CD8-positive, alpha-beta T cell (primary cell): ENCODE measurements at regions of chrX and their contacts with region 1.

Region 1: DNA sequence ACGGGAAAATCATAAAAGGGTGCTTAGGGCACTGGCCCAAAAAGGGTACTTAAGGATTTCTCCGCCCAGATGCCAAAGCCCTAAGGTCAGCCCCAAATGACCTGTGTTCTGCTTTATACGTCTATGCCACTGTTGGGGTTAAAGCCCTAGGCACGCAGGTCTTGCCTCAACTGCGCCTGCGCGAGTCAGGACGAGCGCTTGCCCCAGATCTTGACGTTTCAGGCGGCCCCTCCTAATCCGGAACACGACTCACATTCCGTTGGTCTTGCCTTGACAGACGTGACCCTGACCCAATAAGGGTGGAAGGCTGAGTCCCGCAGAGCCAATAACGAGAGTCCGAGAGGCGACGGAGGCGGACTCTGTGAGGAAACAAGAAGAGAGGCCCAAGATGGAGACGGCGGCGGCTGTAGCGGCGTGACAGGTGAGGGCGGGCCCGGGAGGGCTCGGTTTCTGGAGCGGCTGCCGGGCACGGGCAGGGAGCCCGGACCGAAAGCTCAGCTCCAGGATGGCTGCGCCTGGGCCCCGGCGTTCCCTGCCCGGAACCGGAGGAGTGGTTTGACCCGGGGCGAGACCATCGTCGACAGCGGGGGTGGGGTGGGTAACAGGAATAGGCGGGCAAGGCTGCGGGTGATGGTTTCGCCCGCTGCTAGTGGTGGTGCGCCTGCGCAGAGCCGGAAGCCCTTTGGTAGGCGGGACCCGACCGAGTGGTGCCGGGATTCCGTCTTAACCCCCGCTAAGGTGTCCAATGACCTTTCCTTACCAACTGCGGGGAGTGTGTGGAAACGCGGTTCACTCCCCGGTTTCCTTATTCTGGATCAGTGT is at the start of gene ARAF:
- DNase-seq: peak; percentile 86 to 99 (median 94)
- ATAC-seq: peak; percentile 87
- H3K4me3 ChIP-seq: peak within 1 kb of the TSS; percentile 58 to 91
- H3K4me3 Mint-ChIP-seq: peak within 1 kb of the TSS; percentile 95
- H3K27ac ChIP-seq: peak within 1 kb of the TSS; percentile 98 to 99
- H3K27ac Mint-ChIP-seq: peak within 1 kb of the TSS; percentile 99
- H3K4me1 ChIP-seq: peaks cover 29% of the 10 kb centered on the region
- H3K4me1 Mint-ChIP-seq: peaks cover 46% of the 10 kb centered on the region
- H3K27me3 ChIP-seq: no peaks in the 10 kb centered on the region
- H3K27me3 Mint-ChIP-seq: no peaks in the 10 kb centered on the region
- CTCF ChIP-seq: no peak
- total RNA-seq, gene ARAF: 125 to 134 TPM

Region 2: GRCh38 chrX:47233337-47234113 is 327.5 kb before region 1 on chrX:
- CTCF ChIA-PET with region 1: no interaction called
- POLR2A ChIA-PET with region 1: no interaction called
- intact Hi-C with region 1: loop called in 1 of 2 experiments (anchors 2 kb)
- DNase-seq: peak; percentile 81 to 98 (median 95)
- ATAC-seq: peak; percentile 89
- H3K4me3 ChIP-seq: peak overlapping the region; percentile 77 to 96
- H3K4me3 Mint-ChIP-seq: peak overlapping the region; percentile 96
- H3K27ac ChIP-seq: peak overlapping the region; percentile 100
- H3K27ac Mint-ChIP-seq: peak overlapping the region; percentile 99
- H3K4me1 ChIP-seq: peaks cover 34% of the 10 kb centered on the region
- H3K4me1 Mint-ChIP-seq: peaks cover 40% of the 10 kb centered on the region
- H3K27me3 ChIP-seq: no peaks in the 10 kb centered on the region
- H3K27me3 Mint-ChIP-seq: no peaks in the 10 kb centered on the region
- CTCF ChIP-seq: no peak

Region 3: DNA sequence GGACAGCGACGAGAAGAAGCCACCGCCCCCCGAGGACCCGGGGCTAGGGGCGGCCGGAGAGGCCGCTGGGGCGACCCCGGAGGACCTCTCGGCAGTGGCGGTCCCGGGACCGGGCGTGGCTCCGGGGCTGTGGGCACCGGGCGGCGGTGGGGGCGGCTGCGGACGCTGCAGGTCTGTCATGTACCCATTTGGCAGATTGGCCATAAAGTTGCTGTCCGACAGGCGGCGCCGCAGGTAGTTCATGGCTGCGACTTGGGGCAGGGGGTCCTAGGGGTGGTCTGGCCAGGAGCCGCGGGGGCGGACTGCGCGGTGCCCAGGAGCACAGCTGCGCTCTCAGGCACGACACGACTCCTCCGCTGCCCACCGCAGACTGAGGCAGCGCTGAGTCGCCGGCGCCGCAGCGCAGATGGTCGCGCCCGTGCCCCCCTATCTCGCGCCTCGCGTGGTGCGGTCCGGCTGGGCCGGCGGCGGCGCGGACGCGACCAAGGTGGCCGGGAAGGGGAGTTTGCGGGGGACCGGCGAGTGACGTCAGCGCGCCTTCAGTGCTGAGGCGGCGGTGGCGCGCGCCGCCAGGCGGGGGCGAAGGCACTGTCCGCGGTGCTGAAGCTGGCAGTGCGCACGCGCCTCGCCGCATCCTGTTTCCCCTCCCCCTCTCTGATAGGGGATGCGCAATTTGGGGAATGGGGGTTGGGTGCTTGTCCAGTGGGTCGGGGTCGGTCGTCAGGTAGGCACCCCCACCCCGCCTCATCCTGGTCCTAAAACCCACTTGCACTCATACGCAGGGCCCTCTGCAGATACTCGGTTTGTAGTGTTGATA is 58.7 kb after region 1 on chrX and contains the start of gene SYN1:
- CTCF ChIA-PET with region 1: interaction called, 3 read pairs
- POLR2A ChIA-PET with region 1: no interaction called
- intact Hi-C with region 1: loop called (anchors 2 kb)
- DNase-seq: peak; percentile 63 to 93 (median 83)
- ATAC-seq: peak; percentile 89
- H3K4me3 ChIP-seq: peak within 1 kb of the TSS; percentile 39 to 41
- H3K4me3 Mint-ChIP-seq: peak within 1 kb of the TSS; percentile 46
- H3K27ac ChIP-seq: no peak within 1 kb of the TSS
- H3K27ac Mint-ChIP-seq: no peak within 1 kb of the TSS
- H3K4me1 ChIP-seq: peaks cover 10% of the 10 kb centered on the region
- H3K4me1 Mint-ChIP-seq: peaks cover 21% of the 10 kb centered on the region
- H3K27me3 ChIP-seq: no peaks in the 10 kb centered on the region
- H3K27me3 Mint-ChIP-seq: peaks cover 8% of the 10 kb centered on the region
- CTCF ChIP-seq: no peak
- total RNA-seq, gene SYN1: 0.17 TPM in 1 of 2 experiments, not detected in the other

Region 4: DNA sequence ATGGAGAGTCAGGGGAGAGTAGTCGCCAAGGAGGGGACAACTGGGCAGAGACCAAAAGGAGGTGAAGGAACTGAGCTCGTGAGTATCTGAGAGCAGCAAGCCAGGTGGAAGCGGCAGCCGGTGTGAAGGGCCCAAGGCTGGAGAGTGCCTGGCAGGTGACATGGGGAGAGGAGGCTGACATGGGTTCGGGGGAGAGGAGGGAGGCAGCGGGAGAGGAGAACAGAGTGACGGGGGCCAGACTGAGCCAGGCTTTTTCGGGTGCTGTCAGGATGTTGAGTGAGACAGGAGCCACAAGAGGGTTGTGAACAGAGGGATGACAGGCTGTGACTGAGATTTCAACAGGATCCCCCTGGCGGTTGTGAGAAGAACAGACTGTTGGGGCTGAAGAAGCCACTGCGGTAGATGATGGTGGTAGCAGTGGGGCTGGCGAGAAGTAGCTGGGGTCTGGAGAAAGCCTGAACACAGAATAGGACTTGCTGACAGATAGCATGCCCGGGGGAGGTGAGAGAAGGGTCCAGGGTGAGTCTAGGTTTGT is 83.6 kb after region 1 on chrX:
- CTCF ChIA-PET with region 1: no interaction called
- POLR2A ChIA-PET with region 1: no interaction called
- intact Hi-C with region 1: loop called (anchors 1 to 5 kb)
- DNase-seq: peak in 1 of 9 experiments; percentile 33
- ATAC-seq: peak; percentile 42
- H3K4me3 ChIP-seq: no peak overlapping the region
- H3K4me3 Mint-ChIP-seq: no peak overlapping the region
- H3K27ac ChIP-seq: no peak overlapping the region
- H3K27ac Mint-ChIP-seq: no peak overlapping the region
- H3K4me1 ChIP-seq: peaks cover 19% of the 10 kb centered on the region
- H3K4me1 Mint-ChIP-seq: peaks cover 48% of the 10 kb centered on the region
- H3K27me3 ChIP-seq: no peaks in the 10 kb centered on the region
- H3K27me3 Mint-ChIP-seq: no peaks in the 10 kb centered on the region
- CTCF ChIP-seq: no peak

Region 5: GRCh38 chrX:47658684-47659515 is 97.9 kb after region 1 on chrX and contains the start of gene UXT:
- CTCF ChIA-PET with region 1: no interaction called
- POLR2A ChIA-PET with region 1: no interaction called
- intact Hi-C with region 1: loop called in 1 of 2 experiments (anchors 1 kb)
- DNase-seq: peak; percentile 80 to 95 (median 91)
- ATAC-seq: peak; percentile 81
- H3K4me3 ChIP-seq: peak within 1 kb of the TSS; percentile 86 to 92
- H3K4me3 Mint-ChIP-seq: peak within 1 kb of the TSS; percentile 90
- H3K27ac ChIP-seq: peak within 1 kb of the TSS; percentile 100
- H3K27ac Mint-ChIP-seq: peak within 1 kb of the TSS; percentile 99
- H3K4me1 ChIP-seq: peaks cover 16% of the 10 kb centered on the region
- H3K4me1 Mint-ChIP-seq: peaks cover 15% of the 10 kb centered on the region
- H3K27me3 ChIP-seq: no peaks in the 10 kb centered on the region
- H3K27me3 Mint-ChIP-seq: no peaks in the 10 kb centered on the region
- CTCF ChIP-seq: no peak
- total RNA-seq, gene UXT: 202 TPM

Region 6: GRCh38 chrX:48558271-48558670 is 997.2 kb after region 1 on chrX:
- CTCF ChIA-PET with region 1: no interaction called
- POLR2A ChIA-PET with region 1: no interaction called
- intact Hi-C with region 1: no loop called
- DNase-seq: no peak
- ATAC-seq: no peak
- H3K4me3 ChIP-seq: no peak overlapping the region
- H3K4me3 Mint-ChIP-seq: no peak overlapping the region
- H3K27ac ChIP-seq: no peak overlapping the region
- H3K27ac Mint-ChIP-seq: no peak overlapping the region
- H3K4me1 ChIP-seq: no peaks in the 10 kb centered on the region
- H3K4me1 Mint-ChIP-seq: peaks cover 2% of the 10 kb centered on the region
- H3K27me3 ChIP-seq: no peaks in the 10 kb centered on the region
- H3K27me3 Mint-ChIP-seq: no peaks in the 10 kb centered on the region
- CTCF ChIP-seq: no peak